ENCODE measurements at regions of chr1 and their contacts with region 1.

Region 1: GRCh38 chr1:236982380-236982779 is 21.9 kb downstream of the MT1HL1 start:
- DNase-seq: peak in 1 of 2 donors; percentile 37
- ATAC-seq: peak in 7 of 8 donors; percentile 56 to 96 (median 80)
- H3K4me3 ChIP-seq: no peak overlapping the region
- H3K27ac ChIP-seq: peak overlapping the region; percentile 11 to 87 (median 66)
- H3K4me1 ChIP-seq: peaks cover 0 to 21% (median 9%) of the 10 kb centered on the region in 9 donors
- H3K27me3 ChIP-seq: no peaks in the 10 kb centered on the region
- CTCF ChIP-seq: no peak

Region 2: GRCh38 chr1:236893626-236894545 is 88.5 kb before region 1 on chr1:
- intact Hi-C with region 1: loop called in 1 of 10 experiments (anchors 5 kb)
- DNase-seq: no peak
- ATAC-seq: no peak
- H3K4me3 ChIP-seq: no peak overlapping the region
- H3K27ac ChIP-seq: peak overlapping the region in 7 of 10 donors; percentile 48 to 92 (median 88)
- H3K4me1 ChIP-seq: peaks cover 4 to 77% (median 37%) of the 10 kb centered on the region in 9 donors
- H3K27me3 ChIP-seq: no peaks in the 10 kb centered on the region
- CTCF ChIP-seq: no peak

Measured in heart right ventricle (tissue), 16 donors.